B cell (primary cell): ENCODE measurements at regions of chr10 and their contacts with region 1.

Region 1: DNA sequence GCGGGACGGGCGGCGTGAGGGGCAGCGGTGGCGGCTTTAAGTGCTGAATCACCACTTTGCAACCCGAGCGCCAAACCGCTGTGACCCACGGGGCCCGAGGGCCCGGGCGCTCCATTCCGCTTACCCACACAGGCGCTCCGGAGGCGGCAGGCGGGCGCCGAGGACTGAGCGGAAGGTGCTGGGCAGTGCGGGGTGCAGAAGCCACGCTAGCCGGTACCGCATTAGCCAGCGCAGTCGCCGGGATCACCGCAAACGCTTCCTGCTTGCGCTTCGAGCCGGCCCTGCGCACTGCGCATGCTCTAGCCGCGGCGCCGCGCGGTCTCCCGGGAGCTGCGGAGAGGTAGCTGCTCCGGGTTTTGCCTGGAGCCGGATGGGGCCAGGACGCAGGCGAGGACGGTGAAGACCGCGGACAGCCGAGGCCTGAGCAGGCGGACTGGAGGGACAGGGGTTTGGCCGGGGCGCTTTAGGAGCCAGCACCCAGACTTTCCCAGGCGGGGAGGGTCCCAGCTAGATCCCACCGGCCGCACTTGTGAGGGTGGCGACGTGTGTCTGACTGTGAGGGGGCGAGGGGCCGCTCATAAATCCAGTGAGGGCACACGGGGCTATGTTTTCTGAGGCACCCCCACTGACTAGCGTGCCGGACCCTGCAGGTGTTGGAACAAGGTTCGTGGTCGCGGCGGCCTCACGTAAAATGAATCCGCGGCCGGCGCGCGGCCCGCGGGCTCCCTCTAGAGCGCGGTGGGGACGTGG is at the start of gene IDE:
- DNase-seq: peak; percentile 89
- ATAC-seq: peak; percentile 80
- H3K4me3 ChIP-seq: peak within 1 kb of the TSS; percentile 50 to 94 (median 90)
- H3K4me3 Mint-ChIP-seq: peak within 1 kb of the TSS; percentile 91
- H3K27ac ChIP-seq: peak within 1 kb of the TSS; percentile 70 to 80
- H3K27ac Mint-ChIP-seq: peak within 1 kb of the TSS; percentile 87
- H3K4me1 ChIP-seq: peaks cover 16 to 20% of the 10 kb centered on the region in 2 donors
- H3K4me1 Mint-ChIP-seq: peaks cover 35% of the 10 kb centered on the region
- H3K27me3 ChIP-seq: no peaks in the 10 kb centered on the region
- H3K27me3 Mint-ChIP-seq: no peaks in the 10 kb centered on the region
- CTCF ChIP-seq: peak; percentile 86
- total RNA-seq, gene IDE: 38.5 and 40.9 TPM in 2 replicates

Region 2: DNA sequence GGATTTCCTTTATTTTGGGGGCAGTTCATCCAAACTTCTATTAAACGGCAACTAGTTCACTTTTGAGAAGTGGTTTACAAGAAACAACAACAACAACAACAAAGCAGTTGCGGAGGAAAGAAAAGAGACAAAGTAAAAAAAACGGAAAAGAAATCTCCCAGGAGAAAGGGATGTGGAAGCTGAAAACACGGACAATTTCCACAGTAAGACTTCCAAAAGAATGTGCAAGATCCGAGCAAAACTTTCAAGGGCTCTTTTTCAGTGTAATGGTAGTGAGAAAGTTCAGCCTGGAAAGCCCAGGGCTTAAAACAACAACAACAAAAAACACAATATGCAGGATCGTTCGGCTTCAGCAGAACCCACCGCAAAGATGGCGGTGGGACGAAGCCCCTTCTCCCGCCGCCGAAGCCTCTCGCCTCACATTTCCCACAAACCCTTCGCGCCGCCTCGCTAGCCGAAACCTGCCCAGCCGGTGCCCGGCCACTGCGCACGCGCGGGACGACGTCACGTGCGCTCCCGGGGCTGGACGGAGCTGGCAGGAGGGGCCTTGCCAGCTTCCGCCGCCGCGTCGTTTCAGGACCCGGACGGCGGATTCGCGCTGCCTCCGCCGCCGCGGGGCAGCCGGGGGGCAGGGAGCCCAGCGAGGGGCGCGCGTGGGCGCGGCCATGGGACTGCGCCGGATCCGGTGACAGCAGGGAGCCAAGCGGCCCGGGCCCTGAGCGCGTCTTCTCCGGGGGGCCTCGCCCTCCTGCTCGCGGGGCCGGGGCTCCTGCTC is 775.9 kb before region 1 on chr10 and contains the start of gene TNKS2:
- CTCF ChIA-PET with region 1: no interaction called
- POLR2A ChIA-PET with region 1: no interaction called
- intact Hi-C with region 1: loop called (anchors 5 kb)
- DNase-seq: peak; percentile 96
- ATAC-seq: peak; percentile 75
- H3K4me3 ChIP-seq: peak within 1 kb of the TSS; percentile 77 to 91 (median 83)
- H3K4me3 Mint-ChIP-seq: peak within 1 kb of the TSS; percentile 97
- H3K27ac ChIP-seq: peak within 1 kb of the TSS; percentile 91 to 97
- H3K27ac Mint-ChIP-seq: peak within 1 kb of the TSS; percentile 99
- H3K4me1 ChIP-seq: peaks cover 34 to 36% of the 10 kb centered on the region in 2 donors
- H3K4me1 Mint-ChIP-seq: peaks cover 62% of the 10 kb centered on the region
- H3K27me3 ChIP-seq: no peaks in the 10 kb centered on the region
- H3K27me3 Mint-ChIP-seq: no peaks in the 10 kb centered on the region
- CTCF ChIP-seq: no peak
- total RNA-seq, gene TNKS2: 45.8 and 48.1 TPM in 2 replicates

Region 3: DNA sequence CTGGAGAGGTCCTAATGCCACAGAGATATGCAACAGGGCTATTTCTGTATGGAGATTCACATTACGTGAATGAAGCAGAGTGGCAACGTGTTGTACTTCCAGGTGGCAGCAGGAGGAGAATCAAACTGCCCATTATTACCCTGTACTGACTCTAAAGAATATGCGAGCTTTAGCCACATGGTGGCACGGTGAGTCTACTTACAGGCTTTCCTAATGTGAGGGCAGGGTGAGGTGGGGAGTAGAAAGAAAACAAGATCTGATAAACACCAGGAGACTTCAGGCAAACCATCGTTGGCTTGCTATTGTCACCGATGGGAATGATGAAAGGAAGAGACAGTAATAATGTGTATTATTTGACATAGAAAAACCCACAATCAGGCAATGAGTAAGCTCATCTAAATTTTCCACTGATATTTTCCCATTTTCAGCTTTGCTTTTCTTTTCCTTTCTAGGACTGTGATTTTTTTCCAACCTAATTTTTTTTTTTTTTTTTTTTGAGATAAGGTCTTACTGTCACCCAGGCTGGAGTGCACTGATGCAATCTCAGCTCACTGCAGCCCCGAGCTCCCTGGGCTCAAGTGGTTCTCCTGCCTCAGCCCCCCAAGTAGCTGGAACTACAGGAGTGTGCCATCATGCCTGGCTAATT is 486.1 kb before region 1 on chr10:
- CTCF ChIA-PET with region 1: interaction called, 5 read pairs
- POLR2A ChIA-PET with region 1: no interaction called
- intact Hi-C with region 1: loop called (anchors 5 kb)
- DNase-seq: peak; percentile 83
- ATAC-seq: peak; percentile 99
- H3K4me3 ChIP-seq: no peak overlapping the region
- H3K4me3 Mint-ChIP-seq: no peak overlapping the region
- H3K27ac ChIP-seq: no peak overlapping the region
- H3K27ac Mint-ChIP-seq: no peak overlapping the region
- H3K4me1 ChIP-seq: peaks cover 0 to 5% of the 10 kb centered on the region in 2 donors
- H3K4me1 Mint-ChIP-seq: peaks cover 11% of the 10 kb centered on the region
- H3K27me3 ChIP-seq: no peaks in the 10 kb centered on the region
- H3K27me3 Mint-ChIP-seq: no peaks in the 10 kb centered on the region
- CTCF ChIP-seq: peak; percentile 88

Region 4: DNA sequence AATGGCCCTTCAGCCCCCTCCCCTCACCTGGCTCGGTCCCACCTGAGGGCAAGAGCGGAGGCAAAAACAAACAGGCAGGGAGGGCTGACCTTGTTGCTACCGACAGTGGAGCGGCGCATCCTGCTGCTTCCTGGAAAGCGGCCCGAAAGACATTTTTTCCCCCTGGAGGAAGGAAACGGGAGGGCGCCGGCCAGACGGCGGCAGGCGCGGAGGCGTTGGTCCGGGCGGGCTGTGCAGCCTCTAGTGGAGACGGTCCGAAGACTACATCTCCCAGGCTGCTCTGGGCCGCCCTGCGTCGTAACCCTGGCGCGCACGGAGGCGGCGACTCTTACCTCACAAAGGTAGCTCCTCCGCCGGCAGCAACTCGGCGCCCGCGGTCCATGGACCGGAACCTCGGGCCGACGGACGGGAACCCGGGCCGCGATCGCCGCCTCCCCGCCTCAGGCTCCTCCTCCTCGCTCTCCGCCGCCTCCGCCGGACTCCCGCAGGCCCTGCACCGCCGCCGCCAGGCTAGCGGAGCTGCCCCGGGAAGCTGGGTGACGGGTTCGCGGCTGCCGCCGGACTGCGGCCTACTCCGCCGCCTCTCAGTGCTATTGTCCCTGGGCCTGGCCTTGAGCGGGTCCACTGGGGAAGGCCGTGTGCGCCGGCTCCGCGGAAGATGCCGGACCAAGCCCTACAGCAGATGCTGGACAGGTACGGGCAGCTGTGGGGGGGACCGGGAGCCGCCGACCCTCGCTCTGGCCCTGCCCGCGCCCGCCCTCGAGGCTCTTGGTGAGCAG is 282.9 kb before region 1 on chr10 and contains the starts of genes CPEB3 and MARCHF5:
- CTCF ChIA-PET with region 1: interaction called, 4 read pairs
- POLR2A ChIA-PET with region 1: interaction called, 4 read pairs
- intact Hi-C with region 1: loop called (anchors 5 kb)
- DNase-seq: peak; percentile 96
- ATAC-seq: peak; percentile 97
- H3K4me3 ChIP-seq: peak within 1 kb of the TSS; percentile 57 to 99 (median 85)
- H3K4me3 Mint-ChIP-seq: peak within 1 kb of the TSS; percentile 95
- H3K27ac ChIP-seq: peak within 1 kb of the TSS; percentile 62 to 88
- H3K27ac Mint-ChIP-seq: peak within 1 kb of the TSS; percentile 91
- H3K4me1 ChIP-seq: peaks cover 9 to 20% of the 10 kb centered on the region in 2 donors
- H3K4me1 Mint-ChIP-seq: peaks cover 29% of the 10 kb centered on the region
- H3K27me3 ChIP-seq: no peaks in the 10 kb centered on the region
- H3K27me3 Mint-ChIP-seq: no peaks in the 10 kb centered on the region
- CTCF ChIP-seq: peak; percentile 68
- total RNA-seq, gene CPEB3: 5.0 and 6.7 TPM in 2 replicates
- total RNA-seq, gene MARCHF5: 25.9 and 27.8 TPM in 2 replicates

Region 5: GRCh38 chr10:92530421-92530820 is 43.6 kb before region 1 on chr10:
- CTCF ChIA-PET with region 1: interaction called, 12 read pairs
- POLR2A ChIA-PET with region 1: no interaction called
- intact Hi-C with region 1: no loop called
- DNase-seq: no peak
- ATAC-seq: no peak
- H3K4me3 ChIP-seq: no peak overlapping the region
- H3K4me3 Mint-ChIP-seq: no peak overlapping the region
- H3K27ac ChIP-seq: no peak overlapping the region
- H3K27ac Mint-ChIP-seq: no peak overlapping the region
- H3K4me1 ChIP-seq: no peaks in the 10 kb centered on the region
- H3K4me1 Mint-ChIP-seq: no peaks in the 10 kb centered on the region
- H3K27me3 ChIP-seq: no peaks in the 10 kb centered on the region
- H3K27me3 Mint-ChIP-seq: no peaks in the 10 kb centered on the region
- CTCF ChIP-seq: no peak